Upper lobe of right lung (tissue), 1 donor: ENCODE measurements at regions of chr17 and their contacts with region 1.

Region 1: DNA sequence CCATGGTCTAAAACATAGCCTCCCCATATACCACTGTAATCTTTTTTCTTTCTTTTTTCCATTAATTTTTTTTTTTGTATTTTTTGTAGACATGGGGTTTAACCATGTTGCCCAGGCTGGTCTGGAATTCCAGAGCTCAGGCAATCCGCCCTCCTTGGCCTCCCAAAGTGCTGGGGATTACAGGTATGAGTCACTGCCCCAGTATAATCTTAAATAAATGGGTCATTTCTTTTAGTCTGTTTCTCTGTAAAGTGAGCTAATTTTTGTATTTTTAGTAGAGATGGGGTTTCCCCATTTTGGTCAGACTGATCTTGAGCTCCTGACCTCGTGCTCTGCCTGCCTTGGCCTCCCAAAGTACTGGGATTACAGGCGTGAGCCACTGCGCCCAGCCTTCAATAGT is 5.7 kb upstream of the NME1 start:
- DNase-seq: peak; percentile 11
- ATAC-seq: no peak
- H3K4me3 ChIP-seq: no peak overlapping the region
- H3K27ac ChIP-seq: no peak overlapping the region
- H3K4me1 ChIP-seq: peaks cover 2% of the 10 kb centered on the region
- H3K27me3 ChIP-seq: no peaks in the 10 kb centered on the region
- CTCF ChIP-seq: no peak

Region 2: GRCh38 chr17:51006601-51007000 is 141.0 kb before region 1 on chr17:
- intact Hi-C with region 1: loop called (anchors 5 kb)
- DNase-seq: no peak
- ATAC-seq: no peak
- H3K4me3 ChIP-seq: no peak overlapping the region
- H3K27ac ChIP-seq: no peak overlapping the region
- H3K4me1 ChIP-seq: no peaks in the 10 kb centered on the region
- H3K27me3 ChIP-seq: no peaks in the 10 kb centered on the region
- CTCF ChIP-seq: no peak

Region 3: DNA sequence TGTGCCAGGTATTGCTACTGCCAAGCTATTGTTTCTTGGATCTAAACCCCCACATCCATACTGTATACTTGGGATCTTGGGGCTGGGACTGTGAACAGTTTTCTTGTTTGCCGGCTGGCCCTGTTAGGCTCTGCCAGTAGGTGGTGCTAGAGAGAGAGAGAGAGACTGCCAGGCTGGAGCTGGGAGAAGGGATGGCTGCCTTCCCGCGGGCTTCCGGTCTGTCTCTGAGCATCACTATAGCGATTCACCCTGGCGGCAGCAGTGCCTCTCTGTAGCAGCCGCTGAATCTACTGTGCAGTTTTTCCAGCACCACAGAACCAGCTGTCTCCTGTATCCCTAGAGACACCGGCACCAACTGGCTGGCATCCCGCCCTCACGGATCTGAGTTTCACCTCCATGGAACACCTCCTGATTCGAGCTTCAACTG is 313.9 kb after region 1 on chr17:
- intact Hi-C with region 1: no loop called
- DNase-seq: peak; percentile 75
- ATAC-seq: peak; percentile 95
- H3K4me3 ChIP-seq: no peak overlapping the region
- H3K27ac ChIP-seq: no peak overlapping the region
- H3K4me1 ChIP-seq: no peaks in the 10 kb centered on the region
- H3K27me3 ChIP-seq: no peaks in the 10 kb centered on the region
- CTCF ChIP-seq: peak; percentile 77